Right lobe of liver (tissue), 6 donors: ENCODE measurements at regions of chr11 and their contacts with region 1.

Region 1: DNA sequence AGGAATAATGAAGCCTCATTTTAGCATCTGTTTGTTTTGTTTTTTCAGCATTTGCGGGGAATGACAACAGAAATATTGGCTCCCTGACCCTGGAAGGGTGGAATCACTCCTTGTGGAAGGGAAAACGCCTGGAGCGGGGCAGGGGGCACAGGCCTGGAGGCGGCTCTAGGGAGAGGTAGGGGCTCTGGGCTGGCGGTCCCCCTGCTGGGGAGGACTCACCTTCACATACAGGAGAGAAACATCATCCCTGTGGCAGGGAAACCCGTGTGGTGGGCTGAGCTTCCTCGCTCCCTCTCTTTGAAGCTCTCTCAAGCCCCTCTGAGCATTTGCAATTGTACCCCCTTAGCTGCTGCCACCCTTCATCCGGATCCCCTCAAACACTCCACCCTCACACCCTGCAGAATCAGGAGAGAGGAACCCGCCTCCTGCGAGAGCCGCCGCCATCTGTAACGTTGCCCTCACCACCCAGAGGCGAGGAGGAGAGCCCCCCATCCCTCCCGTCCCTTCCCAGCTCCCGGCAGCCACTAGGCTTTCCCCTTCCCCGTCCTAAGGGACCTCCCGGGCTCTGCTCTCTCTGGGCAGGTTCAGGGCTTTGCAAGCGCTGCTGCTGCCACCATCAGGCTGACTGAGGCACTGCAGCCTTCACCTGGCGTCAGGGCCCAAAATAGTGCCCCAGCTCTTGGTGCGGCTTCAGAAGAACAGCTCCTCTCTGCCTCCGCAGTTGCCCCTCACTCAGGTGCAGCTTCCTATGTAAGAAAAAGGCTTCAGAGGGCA is 10.4 kb downstream of the KIRREL3 start:
- DNase-seq: peak; percentile 69 to 74 (median 72)
- ATAC-seq: peak; percentile 92 to 97 (median 96)
- H3K4me3 ChIP-seq: no peak overlapping the region
- H3K27ac ChIP-seq: no peak overlapping the region
- H3K4me1 ChIP-seq: no peaks in the 10 kb centered on the region
- H3K27me3 ChIP-seq: no peaks in the 10 kb centered on the region
- CTCF ChIP-seq: peak; percentile 87 to 90 (median 89)
- POLR2A ChIP-seq: no peak

Region 2: GRCh38 chr11:126440792-126441514 is 549.2 kb before region 1 on chr11:
- intact Hi-C with region 1: loop called in 1 of 2 experiments (anchors 10 kb)
- DNase-seq: peak; percentile 74 to 78 (median 78)
- ATAC-seq: peak; percentile 88 to 96 (median 94)
- H3K4me3 ChIP-seq: no peak overlapping the region
- H3K27ac ChIP-seq: no peak overlapping the region
- H3K4me1 ChIP-seq: no peaks in the 10 kb centered on the region
- H3K27me3 ChIP-seq: no peaks in the 10 kb centered on the region
- CTCF ChIP-seq: peak; percentile 95 to 97 (median 96)
- POLR2A ChIP-seq: no peak

Region 3: DNA sequence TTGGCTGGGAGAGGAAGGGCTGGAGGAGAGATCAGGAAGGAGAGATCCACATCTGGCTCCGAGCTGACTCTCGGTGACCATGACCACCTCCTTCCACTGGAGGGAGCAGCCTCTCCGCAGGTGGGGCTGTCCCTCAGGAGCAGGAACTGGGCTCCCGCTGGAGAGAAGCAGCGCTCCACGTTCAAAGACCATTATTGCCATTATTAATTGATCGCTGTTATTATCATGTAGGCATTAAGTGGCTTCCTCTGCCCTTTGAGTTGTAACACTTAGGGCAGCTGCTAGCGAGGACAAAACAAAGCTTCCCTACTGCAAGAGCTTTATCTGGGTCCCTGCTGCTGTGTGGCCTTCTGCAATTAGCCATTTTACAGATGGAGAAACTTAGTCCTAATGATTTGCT is 382.8 kb before region 1 on chr11:
- intact Hi-C with region 1: loop called (anchors 5 to 10 kb)
- DNase-seq: peak; percentile 69 to 72 (median 71)
- ATAC-seq: peak; percentile 89 to 97 (median 92)
- H3K4me3 ChIP-seq: no peak overlapping the region
- H3K27ac ChIP-seq: no peak overlapping the region
- H3K4me1 ChIP-seq: peaks cover 0 to 12% (median 3%) of the 10 kb centered on the region in 4 donors
- H3K27me3 ChIP-seq: no peaks in the 10 kb centered on the region
- CTCF ChIP-seq: peak; percentile 84 to 86 (median 84)
- POLR2A ChIP-seq: no peak

Region 4: DNA sequence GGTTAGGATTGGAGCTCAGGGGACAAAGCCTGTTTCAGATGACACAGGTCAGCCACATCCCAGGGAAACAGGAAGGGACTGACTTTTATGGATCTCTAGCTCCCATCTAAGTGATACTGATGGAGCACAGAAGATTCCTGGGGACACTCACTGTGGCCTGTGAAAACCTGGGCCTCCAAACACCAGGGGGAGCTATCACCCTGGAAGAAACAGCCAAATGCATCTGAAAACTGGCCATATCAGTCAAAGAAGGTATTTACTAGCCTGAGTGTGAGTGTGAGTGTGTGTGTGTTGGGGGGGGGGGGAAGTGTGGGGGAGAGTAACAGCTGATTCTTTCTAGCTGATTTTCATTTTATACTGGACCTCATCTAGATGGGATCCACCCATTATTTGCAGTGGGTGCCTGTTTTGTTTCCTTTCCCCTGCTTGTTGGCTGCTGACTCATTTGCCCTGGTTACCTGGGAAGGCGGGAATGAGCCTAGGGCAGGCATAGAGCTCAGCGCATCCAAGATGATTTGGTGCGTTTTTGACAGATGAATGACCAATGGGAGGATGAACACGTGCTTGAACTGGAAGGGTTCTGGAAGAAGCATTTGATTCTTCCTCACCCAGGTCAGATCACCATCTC is 273.6 kb before region 1 on chr11:
- intact Hi-C with region 1: loop called (anchors 10 kb)
- DNase-seq: peak in 1 of 3 donors; percentile 59
- ATAC-seq: peak; percentile 70 to 82 (median 76)
- H3K4me3 ChIP-seq: no peak overlapping the region
- H3K27ac ChIP-seq: no peak overlapping the region
- H3K4me1 ChIP-seq: no peaks in the 10 kb centered on the region
- H3K27me3 ChIP-seq: no peaks in the 10 kb centered on the region
- CTCF ChIP-seq: peak; percentile 47 to 62 (median 56)
- POLR2A ChIP-seq: no peak